ENCODE measurements at regions of chr7 and their contacts with region 1.

Region 1: GRCh38 chr7:158695726-158696452 is 8.7 kb downstream of the NCAPG2 start:
- DNase-seq: no peak
- ATAC-seq: peak; percentile 95

Region 2: GRCh38 chr7:158976849-158977593 is 281.1 kb after region 1 on chr7:
- intact Hi-C with region 1: loop called (anchors 1 kb)
- DNase-seq: peak; percentile 89
- ATAC-seq: peak; percentile 81

Region 3: GRCh38 chr7:159158888-159159405 is 463.1 kb after region 1 on chr7:
- intact Hi-C with region 1: loop called (anchors 5 kb)
- DNase-seq: no peak
- ATAC-seq: no peak

Measured in Right ventricle myocardium inferior (tissue), 1 donor.